ENCODE measurements at regions of chr5 and their contacts with region 1.

Region 1: DNA sequence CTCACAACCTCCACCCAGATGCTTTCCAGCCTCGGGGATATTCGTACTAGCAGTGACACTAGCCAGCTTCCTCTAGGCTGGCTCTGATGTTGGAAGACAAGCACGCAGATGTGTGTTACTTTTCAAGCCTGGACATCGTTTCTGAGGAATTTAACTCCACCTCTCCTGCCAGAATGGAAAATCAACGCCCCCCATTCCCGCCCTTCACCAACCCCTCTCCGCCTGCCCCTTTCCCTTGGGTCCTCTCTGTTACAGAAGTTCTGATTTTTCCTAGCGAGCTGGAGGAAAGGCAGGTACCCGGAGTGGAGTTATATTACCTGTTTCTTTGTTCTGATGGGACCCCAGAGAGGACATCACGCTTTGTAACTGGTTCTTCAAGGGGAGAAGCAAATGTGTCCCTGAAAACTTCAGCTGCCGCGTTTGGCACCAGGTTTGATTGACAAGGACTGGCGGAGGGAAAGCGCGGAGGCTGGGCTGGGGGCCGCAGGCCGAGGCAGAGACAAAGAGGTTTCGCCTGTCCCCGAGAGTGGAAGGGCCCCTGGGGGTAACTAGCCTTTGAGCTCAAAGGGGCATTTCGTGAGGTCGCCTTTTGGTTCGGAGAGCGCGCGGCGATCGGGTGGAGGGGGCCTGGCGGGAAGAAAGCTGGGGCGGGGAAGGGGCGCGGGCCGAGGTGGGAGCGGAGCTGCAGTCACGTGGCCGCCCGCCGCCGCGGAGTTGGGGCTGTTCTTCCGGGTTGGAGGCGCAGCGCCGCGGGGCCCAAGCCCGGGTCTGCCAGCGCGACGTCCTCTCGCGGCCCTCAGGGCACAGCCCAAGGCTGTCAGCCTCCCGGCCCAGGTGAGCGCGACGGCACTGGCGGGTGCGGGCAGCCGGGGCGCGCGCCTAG is at the start of gene NNT:
- DNase-seq: peak; percentile 71 to 85 (median 78)
- ATAC-seq: peak; percentile 85
- H3K4me3 ChIP-seq: peak within 1 kb of the TSS; percentile 78
- H3K4me3 Mint-ChIP-seq: peak within 1 kb of the TSS; percentile 90 to 99 (median 94)
- H3K27ac ChIP-seq: peak within 1 kb of the TSS; percentile 87
- H3K27ac Mint-ChIP-seq: peak within 1 kb of the TSS; percentile 86 to 98 (median 93)
- H3K4me1 ChIP-seq: peaks cover 6 to 14% of the 10 kb centered on the region in 2 donors
- H3K4me1 Mint-ChIP-seq: peaks cover 26 to 72% (median 60%) of the 10 kb centered on the region in 7 donors
- H3K27me3 ChIP-seq: no peaks in the 10 kb centered on the region
- H3K27me3 Mint-ChIP-seq: no peaks in the 10 kb centered on the region
- total RNA-seq, gene NNT: 42.5 to 73.5 (median 60.7) TPM

Region 2: DNA sequence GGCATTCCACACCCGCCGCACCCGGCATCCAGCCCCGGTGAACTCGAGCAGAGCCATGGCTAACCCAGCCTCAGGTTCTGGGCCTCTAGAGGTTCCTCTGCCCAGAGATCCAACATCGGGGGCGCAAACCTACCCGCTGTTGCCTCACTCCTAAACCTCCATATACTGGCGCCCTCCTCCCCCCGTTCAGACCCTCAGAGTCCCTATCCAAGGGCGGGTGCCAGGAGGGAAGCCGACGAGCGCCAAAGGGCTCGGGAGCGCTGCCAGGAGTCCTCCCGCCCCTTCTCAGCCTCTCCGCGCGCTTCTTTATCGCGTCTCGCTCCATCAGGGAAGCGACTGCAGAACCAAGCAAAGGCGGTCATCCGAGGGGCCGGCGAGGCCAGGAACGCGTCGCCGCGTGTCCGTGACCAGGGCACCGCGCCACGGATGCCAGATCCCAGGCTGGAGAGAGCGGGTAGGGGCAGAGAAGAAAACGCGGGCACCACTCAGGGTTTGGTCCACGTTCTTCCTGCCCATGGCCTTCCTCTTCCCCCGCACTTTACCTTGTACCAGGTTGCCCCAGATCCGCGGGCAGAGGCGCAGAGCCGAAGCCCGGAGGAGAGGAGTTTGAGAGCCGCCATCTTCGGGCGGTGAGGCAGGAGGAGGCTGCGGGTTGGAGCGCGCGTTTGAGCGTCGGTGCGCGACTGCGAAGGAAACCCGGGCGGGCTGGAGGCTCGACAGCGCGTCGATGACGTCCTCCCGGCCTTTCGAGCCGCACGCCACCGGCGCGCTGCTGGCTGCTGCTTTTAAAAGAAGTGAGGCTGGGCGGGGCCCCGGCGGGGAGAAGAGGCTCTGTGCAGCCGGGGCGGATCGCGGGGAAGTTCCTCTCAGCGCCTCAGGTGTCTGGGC is 1732.7 kb before region 1 on chr5 and contains the start of gene OXCT1:
- CTCF ChIA-PET with region 1: no interaction called
- POLR2A ChIA-PET with region 1: no interaction called
- intact Hi-C with region 1: loop called in 1 of 2 experiments (anchors 2 kb)
- DNase-seq: peak; percentile 88 to 96 (median 95)
- ATAC-seq: peak; percentile 97
- H3K4me3 ChIP-seq: peak within 1 kb of the TSS; percentile 91
- H3K4me3 Mint-ChIP-seq: peak within 1 kb of the TSS; percentile 85 to 94 (median 90)
- H3K27ac ChIP-seq: peak within 1 kb of the TSS; percentile 97
- H3K27ac Mint-ChIP-seq: peak within 1 kb of the TSS; percentile 89 to 98 (median 97)
- H3K4me1 ChIP-seq: peaks cover 16% of the 10 kb centered on the region in 2 donors
- H3K4me1 Mint-ChIP-seq: peaks cover 18 to 63% (median 57%) of the 10 kb centered on the region in 7 donors
- H3K27me3 ChIP-seq: no peaks in the 10 kb centered on the region
- H3K27me3 Mint-ChIP-seq: no peaks in the 10 kb centered on the region
- total RNA-seq, gene OXCT1: 18.6 to 53.1 (median 30.0) TPM

Region 3: GRCh38 chr5:43396762-43397304 is 205.9 kb before region 1 on chr5:
- CTCF ChIA-PET with region 1: no interaction called
- POLR2A ChIA-PET with region 1: interaction called, 3 read pairs
- intact Hi-C with region 1: loop called in 1 of 2 experiments (anchors 2 kb)
- DNase-seq: peak; percentile 42 to 74 (median 66)
- ATAC-seq: peak; percentile 96
- H3K4me3 ChIP-seq: peak overlapping the region; percentile 80
- H3K4me3 Mint-ChIP-seq: peak overlapping the region; percentile 88 to 100 (median 98)
- H3K27ac ChIP-seq: peak overlapping the region; percentile 76
- H3K27ac Mint-ChIP-seq: peak overlapping the region; percentile 93 to 99 (median 97)
- H3K4me1 ChIP-seq: peaks cover 3 to 7% of the 10 kb centered on the region in 2 donors
- H3K4me1 Mint-ChIP-seq: peaks cover 15 to 62% (median 41%) of the 10 kb centered on the region in 7 donors
- H3K27me3 ChIP-seq: no peaks in the 10 kb centered on the region
- H3K27me3 Mint-ChIP-seq: no peaks in the 10 kb centered on the region

Region 4: GRCh38 chr5:43514816-43515677 is 87.7 kb before region 1 on chr5 and contains the start of gene C5orf34:
- CTCF ChIA-PET with region 1: no interaction called
- POLR2A ChIA-PET with region 1: interaction called, 3 read pairs
- intact Hi-C with region 1: loop called (anchors 1 kb)
- DNase-seq: peak; percentile 84 to 94 (median 89)
- ATAC-seq: peak; percentile 97
- H3K4me3 ChIP-seq: peak within 1 kb of the TSS; percentile 84
- H3K4me3 Mint-ChIP-seq: peak within 1 kb of the TSS; percentile 90 to 97 (median 94)
- H3K27ac ChIP-seq: peak within 1 kb of the TSS; percentile 81
- H3K27ac Mint-ChIP-seq: peak within 1 kb of the TSS; percentile 90 to 98 (median 95)
- H3K4me1 ChIP-seq: peaks cover 8 to 14% of the 10 kb centered on the region in 2 donors
- H3K4me1 Mint-ChIP-seq: peaks cover 17 to 42% (median 36%) of the 10 kb centered on the region in 7 donors
- H3K27me3 ChIP-seq: no peaks in the 10 kb centered on the region
- H3K27me3 Mint-ChIP-seq: no peaks in the 10 kb centered on the region
- total RNA-seq, gene C5orf34: 1.1 to 5.2 (median 3.3) TPM

Region 5: GRCh38 chr5:43573058-43573457 is 29.6 kb before region 1 on chr5:
- CTCF ChIA-PET with region 1: no interaction called
- POLR2A ChIA-PET with region 1: no interaction called
- intact Hi-C with region 1: no loop called
- DNase-seq: no peak
- ATAC-seq: no peak
- H3K4me3 ChIP-seq: no peak overlapping the region
- H3K4me3 Mint-ChIP-seq: no peak overlapping the region
- H3K27ac ChIP-seq: no peak overlapping the region
- H3K27ac Mint-ChIP-seq: no peak overlapping the region
- H3K4me1 ChIP-seq: no peaks in the 10 kb centered on the region
- H3K4me1 Mint-ChIP-seq: no peaks in the 10 kb centered on the region
- H3K27me3 ChIP-seq: no peaks in the 10 kb centered on the region
- H3K27me3 Mint-ChIP-seq: no peaks in the 10 kb centered on the region

Region 6: DNA sequence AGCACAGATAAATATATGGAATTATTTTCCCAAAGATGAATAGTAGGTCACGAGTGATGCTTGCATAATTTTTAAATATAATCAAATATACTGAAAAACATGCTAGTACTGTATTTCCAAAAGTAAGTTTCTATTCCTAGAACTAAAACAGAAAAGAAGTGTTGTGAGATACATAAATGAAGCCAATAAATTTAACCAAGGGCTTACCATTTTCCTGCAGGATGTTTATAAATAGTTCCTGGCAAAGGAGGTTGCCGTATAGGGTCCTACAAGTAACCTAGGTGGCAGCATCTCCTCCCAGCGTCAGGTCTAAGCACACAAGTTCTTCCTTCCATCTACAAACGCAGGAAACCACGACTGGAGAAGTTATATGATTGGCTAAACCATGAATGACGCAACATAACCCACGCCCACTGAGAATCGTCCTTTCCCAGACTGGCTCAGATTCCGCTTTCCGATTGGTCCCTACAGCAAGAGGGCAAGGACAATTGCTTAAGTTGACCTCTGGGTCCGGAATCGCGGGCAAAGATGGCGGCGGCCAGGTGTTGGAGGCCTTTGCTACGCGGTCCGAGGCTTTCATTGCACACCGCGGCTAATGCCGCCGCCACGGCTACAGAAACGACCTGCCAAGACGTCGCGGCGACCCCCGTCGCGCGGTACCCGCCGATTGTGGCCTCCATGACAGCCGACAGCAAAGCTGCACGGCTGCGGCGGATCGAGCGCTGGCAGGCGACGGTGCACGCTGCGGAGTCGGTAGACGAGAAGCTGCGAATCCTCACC is 1205.9 kb after region 1 on chr5 and contains the start of gene MRPS30:
- CTCF ChIA-PET with region 1: interaction called, 3 read pairs
- POLR2A ChIA-PET with region 1: no interaction called
- intact Hi-C with region 1: loop called (anchors 1 kb)
- DNase-seq: peak; percentile 65 to 96 (median 94)
- ATAC-seq: peak; percentile 98
- H3K4me3 ChIP-seq: peak within 1 kb of the TSS; percentile 85
- H3K4me3 Mint-ChIP-seq: peak within 1 kb of the TSS; percentile 86 to 98 (median 96)
- H3K27ac ChIP-seq: peak within 1 kb of the TSS; percentile 81
- H3K27ac Mint-ChIP-seq: peak within 1 kb of the TSS; percentile 84 to 98 (median 95)
- H3K4me1 ChIP-seq: peaks cover 0 to 20% of the 10 kb centered on the region in 2 donors
- H3K4me1 Mint-ChIP-seq: peaks cover 12 to 53% (median 36%) of the 10 kb centered on the region in 7 donors
- H3K27me3 ChIP-seq: no peaks in the 10 kb centered on the region
- H3K27me3 Mint-ChIP-seq: peaks cover 0 to 5% (median 3%) of the 10 kb centered on the region in 5 donors
- total RNA-seq, gene MRPS30: 31.1 to 61.0 (median 47.1) TPM

Measured in naive thymus-derived CD4-positive, alpha-beta T cell (primary cell).